Mucosa of descending colon (tissue), 3 donors: ENCODE measurements at regions of chr9 and their contacts with region 1.

Region 1: DNA sequence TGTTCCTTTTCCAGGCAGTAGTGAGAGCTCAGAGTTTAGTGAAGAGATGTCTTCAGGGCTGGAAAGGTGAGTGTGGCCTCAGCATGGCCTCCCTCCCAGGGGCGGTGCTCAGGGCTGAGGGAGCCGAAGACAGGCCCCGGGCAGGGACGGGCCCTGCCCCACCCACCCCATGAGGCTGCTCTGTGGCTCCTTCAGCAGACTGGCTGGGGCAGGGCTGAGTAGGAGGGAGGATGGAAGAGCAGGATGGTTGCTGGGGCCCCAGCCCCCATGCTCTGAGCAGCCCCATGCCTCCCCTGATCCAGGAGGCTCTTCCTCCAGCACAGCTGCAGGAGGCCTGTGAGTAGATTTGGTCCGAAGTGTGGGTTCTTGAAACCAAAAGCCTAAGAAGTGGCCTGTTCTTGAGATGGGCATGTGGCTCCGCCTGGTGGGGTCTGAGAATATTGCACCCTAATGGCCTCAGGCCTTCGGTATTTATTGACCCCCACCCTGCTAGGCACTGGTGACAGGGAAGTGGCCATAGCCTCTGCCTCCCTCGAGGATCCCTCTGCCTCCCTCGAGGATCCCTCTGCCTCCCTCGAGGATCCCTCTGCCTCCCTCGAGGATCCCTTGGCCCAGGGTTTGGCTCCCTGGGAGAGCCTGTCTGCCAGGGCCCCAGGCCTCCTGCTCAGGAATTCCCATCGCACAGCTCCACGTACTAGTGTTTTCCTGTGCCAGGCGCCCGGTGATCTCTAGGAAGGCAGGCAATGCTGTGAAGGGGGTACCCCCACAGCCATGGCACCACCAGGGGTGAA is 65.4 kb upstream of the GARNL3 start:
- DNase-seq: peak in 2 of 3 donors; percentile 83 to 90
- ATAC-seq: peak; percentile 86
- H3K4me3 ChIP-seq: no peak overlapping the region
- H3K4me1 ChIP-seq: peaks cover 6% of the 10 kb centered on the region
- CTCF ChIP-seq: peak; percentile 81

Region 2: DNA sequence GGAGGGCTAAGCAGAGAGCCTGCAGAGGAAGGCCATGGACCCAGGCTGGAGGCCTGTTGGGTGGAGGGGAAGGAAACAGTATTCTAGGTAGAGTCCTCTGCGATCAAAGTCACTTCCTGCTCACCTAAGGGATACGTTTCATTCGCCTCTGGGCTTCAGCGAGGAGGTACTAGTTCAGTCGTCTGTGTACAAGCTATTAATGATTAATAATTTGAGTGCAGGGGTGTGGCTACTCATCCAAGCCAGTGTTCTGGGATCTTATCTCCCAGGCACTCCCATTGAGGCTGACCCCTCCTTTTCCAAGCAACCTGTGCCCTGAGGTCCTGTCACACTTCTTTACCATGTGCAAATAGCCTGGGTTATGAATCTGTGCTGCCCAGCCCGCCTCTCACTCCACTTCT is 259.4 kb before region 1 on chr9:
- intact Hi-C with region 1: loop called (anchors 2 kb)
- DNase-seq: no peak
- ATAC-seq: peak; percentile 76
- H3K4me3 ChIP-seq: no peak overlapping the region
- H3K4me1 ChIP-seq: no peaks in the 10 kb centered on the region
- CTCF ChIP-seq: no peak